B cell (primary cell): ENCODE measurements at regions of chr5 and their contacts with region 1.

Region 1: GRCh38 chr5:98865690-98866089 is 63.1 kb downstream of the CHD1 start:
- DNase-seq: no peak
- ATAC-seq: no peak
- H3K4me3 ChIP-seq: no peak overlapping the region
- H3K4me3 Mint-ChIP-seq: no peak overlapping the region
- H3K27ac ChIP-seq: no peak overlapping the region
- H3K27ac Mint-ChIP-seq: no peak overlapping the region
- H3K4me1 ChIP-seq: no peaks in the 10 kb centered on the region
- H3K4me1 Mint-ChIP-seq: no peaks in the 10 kb centered on the region
- H3K27me3 ChIP-seq: no peaks in the 10 kb centered on the region
- H3K27me3 Mint-ChIP-seq: no peaks in the 10 kb centered on the region
- CTCF ChIP-seq: no peak

Region 2: DNA sequence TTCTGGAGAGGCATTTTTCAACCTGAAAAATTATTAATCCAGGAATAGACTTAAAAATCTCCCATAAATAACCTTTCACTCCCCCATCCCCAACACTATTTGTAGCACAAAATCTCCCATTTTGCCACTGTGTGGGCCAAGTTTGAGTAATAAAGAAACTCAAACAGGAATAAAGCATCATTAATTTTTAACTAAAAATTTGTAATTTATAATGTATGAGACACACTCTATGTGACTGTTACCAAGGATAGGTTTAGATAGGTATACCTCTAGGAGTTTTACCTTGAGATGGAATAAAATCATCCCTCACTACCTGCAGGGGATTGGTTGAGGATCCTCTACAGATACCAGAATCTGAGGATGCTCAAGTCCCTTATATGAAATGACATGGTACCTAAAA is 33.1 kb after region 1 on chr5:
- CTCF ChIA-PET with region 1: interaction called, 3 read pairs
- POLR2A ChIA-PET with region 1: no interaction called
- intact Hi-C with region 1: loop called (anchors 5 kb)
- DNase-seq: no peak
- ATAC-seq: no peak
- H3K4me3 ChIP-seq: no peak overlapping the region
- H3K4me3 Mint-ChIP-seq: no peak overlapping the region
- H3K27ac ChIP-seq: no peak overlapping the region
- H3K27ac Mint-ChIP-seq: no peak overlapping the region
- H3K4me1 ChIP-seq: no peaks in the 10 kb centered on the region
- H3K4me1 Mint-ChIP-seq: no peaks in the 10 kb centered on the region
- H3K27me3 ChIP-seq: no peaks in the 10 kb centered on the region
- H3K27me3 Mint-ChIP-seq: no peaks in the 10 kb centered on the region
- CTCF ChIP-seq: no peak